WTC11 (cell line): ENCODE measurements at regions of chr1 and their contacts with region 1.

Region 1: GRCh38 chr1:20212685-20213331 is 26.5 kb upstream of the PLA2G2C start:
- DNase-seq: peak; percentile 91
- ATAC-seq: peak; percentile 95
- H3K4me3 Mint-ChIP-seq: peak overlapping the region; percentile 39
- H3K27ac Mint-ChIP-seq: peak overlapping the region; percentile 78; the same call in 1 of the 2 replicates
- H3K4me1 Mint-ChIP-seq: peaks cover 29% of the 10 kb centered on the region
- H3K27me3 Mint-ChIP-seq: no peaks in the 10 kb centered on the region
- CTCF ChIP-seq: peak; percentile 53

Region 2: DNA sequence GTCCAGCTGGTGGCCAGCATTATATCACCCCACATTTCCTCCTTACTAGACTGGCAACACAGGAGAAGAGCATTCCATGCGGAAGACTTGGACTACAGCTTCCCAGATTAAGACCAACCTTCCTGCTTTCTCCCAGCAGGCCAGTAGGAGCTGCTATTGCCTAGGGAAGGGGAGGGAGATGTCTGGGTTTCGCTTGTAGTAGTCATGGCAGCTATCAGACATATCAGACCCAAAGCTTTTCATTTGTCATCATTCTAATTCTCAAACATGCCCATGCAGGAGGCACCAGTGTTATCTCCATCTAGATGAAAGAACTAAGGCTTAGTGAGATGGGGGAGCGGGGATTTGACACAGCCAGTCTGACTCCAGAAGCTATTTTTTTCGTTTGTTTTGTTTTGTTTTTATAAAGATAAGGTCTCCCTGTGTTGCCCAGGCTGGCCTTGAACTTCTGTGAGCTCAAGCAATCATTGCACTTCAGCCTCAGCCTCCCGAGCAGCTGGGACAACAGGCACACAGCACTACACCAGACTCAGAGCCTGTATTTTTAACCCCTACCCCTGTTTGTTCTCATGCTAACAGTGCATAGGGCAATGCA is 237.9 kb before region 1 on chr1:
- CTCF ChIA-PET with region 1: interaction called, 15 read pairs
- POLR2A ChIA-PET with region 1: no interaction called
- DNase-seq: peak; percentile 66
- ATAC-seq: peak; percentile 93
- H3K4me3 Mint-ChIP-seq: no peak overlapping the region
- H3K27ac Mint-ChIP-seq: no peak overlapping the region
- H3K4me1 Mint-ChIP-seq: peaks cover 28% of the 10 kb centered on the region
- H3K27me3 Mint-ChIP-seq: no peaks in the 10 kb centered on the region; the same call in 1 of the 2 replicates
- CTCF ChIP-seq: peak; percentile 47; the same call in 1 of the 2 replicates

Region 3: DNA sequence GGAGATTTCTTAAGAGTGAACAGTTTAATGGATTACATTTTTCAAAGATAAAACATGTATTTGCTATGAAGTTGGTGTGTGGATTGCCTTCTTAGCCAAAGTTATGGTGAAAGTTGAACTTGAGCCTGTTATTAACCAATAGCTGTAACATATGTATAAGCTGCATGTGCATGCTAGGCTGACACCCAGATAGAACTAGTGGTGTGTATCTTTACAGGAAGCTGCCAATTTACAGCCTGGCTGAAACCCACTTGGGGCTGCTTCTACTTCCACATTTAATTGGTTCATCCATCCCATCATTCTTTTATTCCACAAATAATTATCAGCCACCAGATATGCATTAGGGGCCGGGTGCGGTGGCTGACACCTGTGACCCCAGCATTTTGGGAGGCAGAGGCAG is 139.6 kb before region 1 on chr1:
- CTCF ChIA-PET with region 1: no interaction called
- POLR2A ChIA-PET with region 1: no interaction called
- DNase-seq: no peak
- ATAC-seq: no peak
- H3K4me3 Mint-ChIP-seq: no peak overlapping the region
- H3K27ac Mint-ChIP-seq: no peak overlapping the region
- H3K4me1 Mint-ChIP-seq: peaks cover 16% of the 10 kb centered on the region
- H3K27me3 Mint-ChIP-seq: peaks cover 3% of the 10 kb centered on the region; the same call in 1 of the 2 replicates
- CTCF ChIP-seq: no peak

Region 4: DNA sequence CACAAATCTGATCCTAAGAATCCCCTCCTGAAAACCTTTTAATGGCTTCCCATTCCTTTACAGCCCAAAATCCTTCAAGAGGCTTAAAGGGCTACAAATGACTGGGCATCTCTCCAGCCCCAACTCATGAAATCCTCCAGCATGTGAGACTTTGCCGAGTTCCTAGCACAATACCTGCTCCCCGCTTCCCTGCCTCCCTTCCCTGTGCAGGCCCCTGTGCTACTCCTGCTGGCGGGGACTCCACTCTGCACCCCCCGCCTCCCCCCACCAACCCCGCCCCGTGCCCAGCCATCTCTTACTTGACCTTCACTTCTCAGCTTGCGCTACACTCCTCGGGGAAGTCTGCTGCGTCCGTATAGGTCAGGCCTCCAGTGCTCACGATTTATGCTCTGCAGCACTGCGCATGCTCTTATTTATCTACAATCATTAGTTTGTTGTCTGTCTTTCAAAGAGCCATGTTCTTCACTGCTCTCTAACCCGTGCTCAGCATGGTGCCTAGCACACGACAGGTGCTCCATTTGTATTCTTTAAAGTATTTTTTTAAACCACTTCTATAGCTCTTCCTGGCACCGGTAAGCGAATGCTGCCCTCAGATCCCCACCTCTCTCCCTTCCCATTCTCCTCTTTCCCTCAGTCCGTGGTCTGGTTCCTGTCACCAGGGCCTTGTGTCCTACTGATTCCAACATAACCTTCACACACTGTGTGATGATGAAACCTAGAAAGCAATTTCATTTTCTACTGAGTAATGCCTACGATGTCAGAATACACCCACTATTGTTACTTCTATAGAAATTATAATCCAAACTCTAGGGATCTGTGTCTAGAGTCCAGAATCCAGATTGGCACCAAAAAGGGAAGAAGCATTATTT is 11.0 kb after region 1 on chr1:
- CTCF ChIA-PET with region 1: interaction called, 16 read pairs
- POLR2A ChIA-PET with region 1: no interaction called
- DNase-seq: peak; percentile 39
- ATAC-seq: peak; percentile 88
- H3K4me3 Mint-ChIP-seq: no peak overlapping the region
- H3K27ac Mint-ChIP-seq: no peak overlapping the region
- H3K4me1 Mint-ChIP-seq: peaks cover 22% of the 10 kb centered on the region
- H3K27me3 Mint-ChIP-seq: peaks cover 43% of the 10 kb centered on the region
- CTCF ChIP-seq: no peak

Region 5: GRCh38 chr1:20343149-20343937 is 130.5 kb after region 1 on chr1:
- CTCF ChIA-PET with region 1: interaction called, 11 read pairs
- POLR2A ChIA-PET with region 1: interaction called, 3 read pairs
- DNase-seq: peak; percentile 89
- ATAC-seq: peak; percentile 75
- H3K4me3 Mint-ChIP-seq: peak overlapping the region; percentile 67
- H3K27ac Mint-ChIP-seq: no peak overlapping the region
- H3K4me1 Mint-ChIP-seq: peaks cover 29% of the 10 kb centered on the region
- H3K27me3 Mint-ChIP-seq: peaks cover 25% of the 10 kb centered on the region
- CTCF ChIP-seq: no peak

Region 6: DNA sequence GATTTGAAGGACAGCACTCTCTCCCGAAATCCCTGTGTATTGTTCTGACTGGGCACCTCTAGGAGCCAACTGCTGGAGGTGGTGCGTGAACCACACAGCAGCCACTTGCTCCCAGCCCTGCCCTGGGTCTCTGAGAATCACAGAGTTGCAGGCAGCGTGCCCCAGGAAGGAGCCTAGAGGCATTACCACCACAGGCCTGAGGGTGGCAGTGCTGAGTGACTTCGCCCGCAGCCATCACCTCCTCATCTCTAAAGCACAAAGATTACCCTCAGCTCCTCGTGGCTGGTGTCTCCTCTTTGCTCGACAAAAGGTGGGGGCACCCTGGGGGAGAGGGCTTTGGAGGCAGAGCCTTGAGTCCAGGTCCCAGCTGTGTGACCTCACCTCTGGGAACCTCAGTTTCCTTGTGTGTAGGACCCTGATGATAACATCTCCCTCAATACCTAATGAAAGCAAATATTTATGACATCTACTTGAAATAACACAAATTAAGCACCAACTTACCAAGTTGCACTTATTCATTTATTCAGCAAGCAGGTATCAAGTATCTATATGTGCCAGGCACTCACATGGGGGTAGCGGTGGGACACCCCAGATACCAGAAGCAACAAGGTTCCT is 164.2 kb after region 1 on chr1:
- CTCF ChIA-PET with region 1: interaction called, 16 read pairs
- POLR2A ChIA-PET with region 1: no interaction called
- DNase-seq: peak; percentile 85
- ATAC-seq: peak; percentile 96
- H3K4me3 Mint-ChIP-seq: no peak overlapping the region
- H3K27ac Mint-ChIP-seq: no peak overlapping the region
- H3K4me1 Mint-ChIP-seq: 0 out of 2 replicates have a peak, but pooled peaks cover 6% of the 10 kb centered on the region
- H3K27me3 Mint-ChIP-seq: peaks cover 62% of the 10 kb centered on the region
- CTCF ChIP-seq: peak; percentile 67

Region 7: DNA sequence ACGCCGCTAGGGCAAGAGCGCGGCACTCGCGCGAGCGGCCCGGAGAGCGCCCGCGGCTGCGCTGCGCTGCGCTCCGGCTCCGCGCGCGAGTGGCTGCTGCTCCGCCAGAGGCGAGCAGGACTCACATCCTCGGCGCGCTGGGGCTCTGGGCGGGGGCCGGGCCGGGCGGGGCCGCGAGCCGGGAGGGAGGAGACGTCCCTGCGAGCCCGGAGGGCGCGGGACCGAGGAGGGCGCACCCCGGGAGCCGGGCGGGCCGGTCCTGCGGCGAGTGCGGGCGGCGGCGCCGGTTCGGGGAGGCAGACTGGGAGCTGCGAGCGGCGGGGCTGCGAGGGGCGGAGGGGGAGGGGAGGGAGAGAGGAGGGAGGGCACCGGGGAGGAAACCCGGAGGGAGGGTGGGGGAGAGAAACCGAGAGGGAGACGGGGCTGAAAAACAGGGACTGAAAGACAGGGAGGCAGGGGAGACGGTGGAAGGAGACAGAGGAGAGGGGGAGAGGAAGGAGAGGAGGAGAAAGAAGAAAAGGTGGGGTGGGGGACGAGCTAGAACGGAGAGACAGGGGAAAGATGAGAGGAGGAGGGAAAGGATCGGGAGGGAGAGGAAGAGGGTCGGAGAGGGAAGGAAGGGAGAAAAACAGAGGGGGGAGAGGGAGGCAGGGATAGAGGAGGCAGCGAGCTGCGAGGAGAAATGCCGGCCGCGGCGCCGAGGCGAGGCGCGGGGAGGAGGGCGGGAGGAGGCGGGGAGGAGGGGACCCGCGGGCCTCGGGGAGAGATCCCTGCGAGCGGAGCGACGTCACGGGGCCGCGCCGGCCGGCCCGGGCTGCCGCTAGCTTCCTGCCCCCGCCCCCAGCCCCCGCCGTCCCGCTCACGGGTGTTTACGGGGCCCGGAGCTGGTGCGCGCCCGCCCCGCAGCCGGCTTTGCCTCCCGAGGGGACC is 273.0 kb after region 1 on chr1 and contains the start of gene CAMK2N1:
- CTCF ChIA-PET with region 1: interaction called, 33 read pairs
- POLR2A ChIA-PET with region 1: interaction called, 4 read pairs
- DNase-seq: peak; percentile 65
- ATAC-seq: peak; percentile 20
- H3K4me3 Mint-ChIP-seq: peak within 1 kb of the TSS; percentile 89
- H3K27ac Mint-ChIP-seq: peak within 1 kb of the TSS; percentile 79
- H3K4me1 Mint-ChIP-seq: peaks cover 46% of the 10 kb centered on the region
- H3K27me3 Mint-ChIP-seq: peaks cover 80% of the 10 kb centered on the region
- CTCF ChIP-seq: no peak
- total RNA-seq, gene CAMK2N1: 10.0 to 10.9 TPM (median 10.1 TPM) in 3 replicates